GM12878 (cell line): ENCODE measurements at regions of chr1 and their contacts with region 1.

Region 1: DNA sequence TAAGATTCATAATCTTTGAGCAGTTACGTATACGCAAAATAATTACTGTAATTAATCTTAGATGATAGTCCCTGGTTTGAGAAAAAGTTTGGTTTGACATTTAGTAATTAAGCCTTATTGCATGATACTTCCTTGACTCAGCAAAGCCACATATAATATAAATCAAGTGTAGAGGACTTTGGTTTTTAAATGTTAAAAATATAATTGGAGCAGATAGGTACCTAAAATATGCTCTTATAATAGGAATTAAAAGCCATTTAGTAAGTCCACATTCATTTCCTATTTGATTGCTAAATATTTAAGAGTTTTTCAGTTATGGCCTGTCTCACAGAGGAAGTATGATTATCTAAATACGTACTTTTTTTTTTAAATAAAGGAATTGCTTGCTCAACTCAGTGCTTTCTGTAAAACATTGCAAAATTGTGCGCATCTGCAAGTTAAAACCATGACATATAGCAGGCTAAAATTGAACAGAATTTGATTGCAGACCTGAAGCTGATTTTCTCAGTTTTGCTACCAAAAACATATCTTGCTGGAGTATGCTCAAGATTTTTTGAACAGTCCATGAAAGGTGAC is 20.4 kb downstream of the RPE65 start:
- DNase-seq: no peak
- ATAC-seq: no peak
- H3K4me3 ChIP-seq: no peak overlapping the region
- H3K27ac ChIP-seq: no peak overlapping the region
- H3K4me1 ChIP-seq: no peaks in the 10 kb centered on the region
- H3K27me3 ChIP-seq: no peaks in the 10 kb centered on the region
- CTCF ChIP-seq: no peak
- EP300 ChIP-seq: no peak
- POLR2A ChIP-seq: no peak
- RAD21 ChIP-seq: no peak

Region 2: GRCh38 chr1:68409426-68409825 is 19.9 kb before region 1 on chr1:
- CTCF ChIA-PET with region 1: no interaction called
- POLR2A ChIA-PET with region 1: no interaction called
- RAD21 ChIA-PET with region 1: no interaction called
- SMC1A ChIA-PET with region 1: no interaction called
- in situ Hi-C with region 1: no loop called
- intact Hi-C with region 1: no loop called
- DNase-seq: no peak
- ATAC-seq: no peak
- H3K4me3 ChIP-seq: no peak overlapping the region
- H3K27ac ChIP-seq: no peak overlapping the region
- H3K4me1 ChIP-seq: no peaks in the 10 kb centered on the region
- H3K27me3 ChIP-seq: no peaks in the 10 kb centered on the region
- CTCF ChIP-seq: no peak
- EP300 ChIP-seq: no peak
- POLR2A ChIP-seq: no peak
- RAD21 ChIP-seq: no peak

Region 3: DNA sequence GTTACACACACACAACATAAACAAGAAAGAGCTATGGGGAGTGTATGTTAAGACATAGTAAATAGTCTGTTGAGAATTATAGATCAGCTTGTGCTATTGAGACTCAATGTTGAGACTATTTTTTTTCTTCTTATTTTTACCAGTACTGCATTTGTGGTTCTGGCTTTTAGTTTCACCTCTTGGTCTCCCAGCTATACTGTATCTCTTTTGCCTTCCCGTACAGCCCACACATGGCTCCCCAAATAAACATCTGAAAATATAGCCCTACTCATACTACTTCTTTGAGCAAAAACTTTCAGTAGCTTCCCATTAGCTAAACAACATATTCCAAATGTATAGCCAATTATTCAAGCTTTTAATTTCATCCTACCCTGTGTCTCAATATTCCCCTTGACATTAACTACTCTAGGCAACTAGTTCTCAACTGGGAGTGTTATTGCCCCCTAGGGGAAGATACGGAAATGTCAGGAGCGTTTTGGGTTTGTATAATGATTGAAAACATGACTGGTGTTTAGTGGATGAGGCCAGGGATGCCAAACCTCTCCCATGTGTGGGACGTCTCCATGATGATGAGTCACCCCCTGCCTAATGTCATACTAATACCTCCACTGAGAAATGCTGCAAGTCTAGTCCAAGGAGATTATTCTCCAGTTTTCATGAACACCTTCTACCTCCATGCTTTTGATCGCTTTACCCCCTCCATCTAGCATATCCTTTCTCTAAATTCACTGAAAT is 13.7 kb after region 1 on chr1:
- CTCF ChIA-PET with region 1: interaction called, 13 read pairs
- POLR2A ChIA-PET with region 1: interaction called, 3 read pairs
- RAD21 ChIA-PET with region 1: no interaction called
- SMC1A ChIA-PET with region 1: interaction called, 4 read pairs
- in situ Hi-C with region 1: no loop called
- intact Hi-C with region 1: no loop called
- DNase-seq: no peak
- ATAC-seq: peak; percentile 91
- H3K4me3 ChIP-seq: no peak overlapping the region
- H3K27ac ChIP-seq: no peak overlapping the region
- H3K4me1 ChIP-seq: no peaks in the 10 kb centered on the region
- H3K27me3 ChIP-seq: no peaks in the 10 kb centered on the region
- CTCF ChIP-seq: peak; percentile 56 to 69 (median 62)
- EP300 ChIP-seq: no peak
- POLR2A ChIP-seq: no peak
- RAD21 ChIP-seq: peak; percentile 61